ENCODE measurements at regions of chr13 and their contacts with region 1.

Region 1: DNA sequence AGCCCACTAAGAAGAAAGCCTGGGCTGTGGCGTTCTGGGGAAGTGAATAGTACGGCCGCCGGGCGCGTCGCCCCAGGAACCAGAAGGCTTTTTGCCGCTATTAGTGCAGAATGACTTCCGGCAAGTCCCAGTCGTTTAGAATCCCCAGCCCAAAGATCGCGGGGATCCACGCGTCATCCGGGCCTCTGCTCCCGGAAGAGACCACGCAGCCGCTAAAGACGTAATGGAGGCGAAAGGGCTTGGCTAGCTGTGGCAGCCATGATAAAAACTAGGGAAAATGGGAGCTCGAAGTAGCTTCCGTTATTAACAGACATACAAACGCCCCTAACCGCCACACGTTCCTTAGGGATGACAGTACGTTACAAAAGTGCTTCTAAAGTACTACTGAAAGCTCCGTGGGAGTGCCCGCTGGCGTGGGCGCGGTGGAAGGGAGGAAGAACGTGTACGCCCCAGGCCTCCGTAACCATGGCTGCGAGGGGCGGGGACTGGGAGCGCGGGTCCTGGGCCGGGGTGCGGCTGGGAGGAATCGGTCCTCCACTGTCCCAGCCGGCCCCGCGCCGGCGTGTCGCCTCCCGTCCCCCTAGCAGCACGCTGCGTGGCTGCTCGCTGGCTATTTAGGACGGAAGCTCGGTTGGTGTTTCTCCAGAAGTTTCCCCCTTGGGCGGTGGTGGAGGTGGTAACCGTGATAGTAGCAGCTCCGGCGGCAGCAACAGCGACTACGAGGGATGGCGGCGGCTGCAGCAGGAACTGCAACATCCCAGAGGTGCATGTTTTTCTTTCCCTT is at the start of gene SUGT1:
- DNase-seq: peak; percentile 97
- ATAC-seq: peak; percentile 96
- H3K4me3 Mint-ChIP-seq: no peak within 1 kb of the TSS
- H3K27ac Mint-ChIP-seq: peak within 1 kb of the TSS; percentile 50
- H3K4me1 Mint-ChIP-seq: peaks cover 8% of the 10 kb centered on the region
- H3K27me3 Mint-ChIP-seq: no peaks in the 10 kb centered on the region
- total RNA-seq, gene SUGT1: 48.5 to 50.7 TPM

Region 2: DNA sequence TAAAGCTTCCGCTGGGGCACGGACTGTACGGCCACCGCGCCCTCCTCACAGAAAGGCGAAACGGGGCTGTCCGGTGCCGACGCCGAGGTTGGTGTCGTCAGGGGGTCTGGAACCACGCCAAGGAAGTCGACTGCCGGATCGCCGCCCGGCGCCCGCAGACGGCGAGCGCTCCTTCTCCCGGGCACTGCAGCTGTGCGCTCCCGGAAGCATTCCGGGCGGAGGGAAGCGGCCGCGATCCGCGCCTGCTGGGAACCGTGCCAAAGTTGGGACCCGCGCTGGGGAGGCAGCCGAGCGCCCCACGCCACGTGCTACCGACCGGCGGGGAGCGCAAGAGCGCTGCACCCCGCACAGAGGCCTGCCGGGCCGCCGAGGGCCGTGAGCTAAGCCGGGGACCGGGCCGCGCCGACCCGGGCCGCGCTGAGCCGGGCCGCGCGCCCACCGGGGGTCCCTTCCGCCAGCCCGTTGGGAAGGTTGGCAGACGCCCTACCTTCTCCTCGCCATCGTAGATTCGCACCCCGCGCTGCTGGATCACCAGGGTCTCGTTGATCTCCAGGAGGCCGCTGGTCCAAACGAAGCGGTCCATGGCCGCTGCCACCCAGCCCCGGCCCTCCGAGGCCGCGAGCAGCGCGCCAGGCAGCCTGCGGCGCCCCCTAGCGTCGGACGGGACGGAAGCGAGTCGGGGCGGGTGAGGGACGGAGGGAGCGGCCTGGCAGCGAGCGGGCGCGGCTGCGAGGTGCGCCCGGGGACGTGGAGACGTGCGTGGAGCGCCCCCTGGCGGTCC is 202.2 kb before region 1 on chr13 and contains the start of gene VPS36:
- CTCF ChIA-PET with region 1: interaction called, 12 read pairs
- POLR2A ChIA-PET with region 1: interaction called, 3 read pairs
- DNase-seq: peak; percentile 95
- ATAC-seq: peak; percentile 81
- H3K4me3 Mint-ChIP-seq: peak within 1 kb of the TSS; percentile 87
- H3K27ac Mint-ChIP-seq: peak within 1 kb of the TSS; percentile 91
- H3K4me1 Mint-ChIP-seq: peaks cover 36% of the 10 kb centered on the region
- H3K27me3 Mint-ChIP-seq: no peaks in the 10 kb centered on the region
- total RNA-seq, gene VPS36: 39.1 to 43.2 TPM

Region 3: GRCh38 chr13:52617070-52618060 is 35.0 kb before region 1 on chr13:
- CTCF ChIA-PET with region 1: interaction called, 31 read pairs
- POLR2A ChIA-PET with region 1: interaction called, 38 read pairs
- DNase-seq: peak; percentile 90
- ATAC-seq: peak; percentile 96
- H3K4me3 Mint-ChIP-seq: peak overlapping the region; percentile 100
- H3K27ac Mint-ChIP-seq: peak overlapping the region; percentile 92
- H3K4me1 Mint-ChIP-seq: peaks cover 32% of the 10 kb centered on the region
- H3K27me3 Mint-ChIP-seq: peaks cover 9% of the 10 kb centered on the region

Region 4: GRCh38 chr13:52638666-52639328 is 13.6 kb before region 1 on chr13:
- CTCF ChIA-PET with region 1: interaction called, 10 read pairs
- POLR2A ChIA-PET with region 1: interaction called, 4 read pairs
- DNase-seq: no peak
- ATAC-seq: no peak
- H3K4me3 Mint-ChIP-seq: no peak overlapping the region
- H3K27ac Mint-ChIP-seq: no peak overlapping the region
- H3K4me1 Mint-ChIP-seq: peaks cover 6% of the 10 kb centered on the region
- H3K27me3 Mint-ChIP-seq: no peaks in the 10 kb centered on the region

Region 5: GRCh38 chr13:52665325-52665724 is 12.9 kb after region 1 on chr13:
- CTCF ChIA-PET with region 1: interaction called, 48 read pairs
- POLR2A ChIA-PET with region 1: interaction called, 3 read pairs
- DNase-seq: no peak
- ATAC-seq: peak; percentile 42
- H3K4me3 Mint-ChIP-seq: no peak overlapping the region
- H3K27ac Mint-ChIP-seq: no peak overlapping the region
- H3K4me1 Mint-ChIP-seq: no peaks in the 10 kb centered on the region
- H3K27me3 Mint-ChIP-seq: no peaks in the 10 kb centered on the region

Region 6: DNA sequence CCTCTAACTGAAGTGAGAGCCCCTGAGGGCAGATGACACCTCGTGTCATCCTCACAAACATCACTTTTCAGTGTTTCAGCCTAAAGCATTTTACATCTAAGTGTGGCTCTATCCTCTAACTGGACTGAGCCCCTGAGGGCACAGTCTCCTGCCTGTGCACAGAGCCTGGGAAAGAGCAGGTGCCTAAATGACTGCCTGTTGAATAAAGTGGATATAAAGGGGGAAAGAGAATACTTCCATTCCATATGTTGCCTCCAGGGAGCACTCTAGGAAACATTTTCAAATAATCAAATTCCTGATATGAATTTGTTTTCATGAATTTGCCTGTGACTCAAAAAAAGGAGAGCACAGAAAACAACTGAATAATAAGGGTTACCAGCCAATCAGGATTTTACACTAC is 55.0 kb after region 1 on chr13:
- CTCF ChIA-PET with region 1: no interaction called
- POLR2A ChIA-PET with region 1: no interaction called
- DNase-seq: no peak
- ATAC-seq: no peak
- H3K4me3 Mint-ChIP-seq: no peak overlapping the region
- H3K27ac Mint-ChIP-seq: no peak overlapping the region
- H3K4me1 Mint-ChIP-seq: no peaks in the 10 kb centered on the region
- H3K27me3 Mint-ChIP-seq: peaks cover 5% of the 10 kb centered on the region

Region 7: DNA sequence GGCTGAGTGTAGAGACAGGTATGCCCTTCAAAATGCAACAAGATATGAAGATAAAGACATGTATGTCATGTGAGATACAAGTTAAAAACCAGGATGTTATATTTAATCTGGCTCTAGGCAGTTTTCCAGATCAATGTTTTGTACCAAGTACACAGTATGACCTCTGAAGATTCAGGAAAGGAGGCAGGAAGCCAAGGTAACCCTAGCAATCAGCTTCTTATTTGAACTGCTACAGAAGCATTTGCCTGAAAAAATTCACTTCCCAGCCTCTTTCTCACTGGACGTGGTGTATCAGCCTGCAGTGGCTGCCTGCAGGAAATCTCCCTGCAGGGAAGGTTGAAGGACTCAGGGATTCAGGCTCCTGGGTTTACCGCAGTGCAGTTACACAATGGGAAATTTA is 400.3 kb after region 1 on chr13:
- CTCF ChIA-PET with region 1: no interaction called
- POLR2A ChIA-PET with region 1: no interaction called
- DNase-seq: no peak
- ATAC-seq: no peak
- H3K4me3 Mint-ChIP-seq: no peak overlapping the region
- H3K27ac Mint-ChIP-seq: no peak overlapping the region
- H3K4me1 Mint-ChIP-seq: no peaks in the 10 kb centered on the region
- H3K27me3 Mint-ChIP-seq: no peaks in the 10 kb centered on the region

Region 8: DNA sequence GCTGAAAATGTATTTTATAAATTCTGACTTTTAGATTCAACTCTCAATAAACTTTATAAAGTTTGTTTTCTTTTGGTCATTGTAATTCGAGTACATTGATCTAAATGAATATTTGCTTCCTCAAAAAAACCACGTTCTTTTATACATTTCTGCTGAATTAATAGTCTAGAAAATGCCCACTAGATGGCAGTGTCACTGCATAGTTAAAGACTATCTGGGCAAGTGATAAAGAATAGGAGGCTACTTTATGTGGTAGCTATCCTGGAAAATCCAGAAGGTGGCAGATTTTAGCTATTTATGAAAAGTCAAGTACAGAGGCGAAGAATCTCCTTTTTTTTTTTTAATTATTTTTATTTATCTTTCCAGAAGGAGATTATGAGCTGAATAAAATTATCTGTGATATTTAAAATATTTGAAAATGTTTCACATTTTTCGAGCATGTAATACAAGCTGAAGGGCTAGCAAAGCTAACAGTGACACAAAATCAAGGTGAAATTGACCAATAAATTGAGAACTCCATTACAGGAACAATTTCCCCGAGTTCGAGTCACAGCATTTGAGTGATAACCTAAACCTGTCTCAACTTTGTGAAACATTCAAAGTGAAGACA is 598.0 kb after region 1 on chr13:
- CTCF ChIA-PET with region 1: no interaction called
- POLR2A ChIA-PET with region 1: no interaction called
- DNase-seq: peak; percentile 48
- ATAC-seq: peak; percentile 65
- H3K4me3 Mint-ChIP-seq: no peak overlapping the region
- H3K27ac Mint-ChIP-seq: no peak overlapping the region
- H3K4me1 Mint-ChIP-seq: no peaks in the 10 kb centered on the region
- H3K27me3 Mint-ChIP-seq: no peaks in the 10 kb centered on the region

Measured in activated CD8-positive, alpha-beta T cell treated with anti-CD3 and anti-CD28 coated beads, Interleukin-2, amount 10 ng/mL, durations not matched to agents 7 days and 5 days (primary cell).